ENCODE measurements at regions of chr14 and their contacts with region 1.

Region 1: DNA sequence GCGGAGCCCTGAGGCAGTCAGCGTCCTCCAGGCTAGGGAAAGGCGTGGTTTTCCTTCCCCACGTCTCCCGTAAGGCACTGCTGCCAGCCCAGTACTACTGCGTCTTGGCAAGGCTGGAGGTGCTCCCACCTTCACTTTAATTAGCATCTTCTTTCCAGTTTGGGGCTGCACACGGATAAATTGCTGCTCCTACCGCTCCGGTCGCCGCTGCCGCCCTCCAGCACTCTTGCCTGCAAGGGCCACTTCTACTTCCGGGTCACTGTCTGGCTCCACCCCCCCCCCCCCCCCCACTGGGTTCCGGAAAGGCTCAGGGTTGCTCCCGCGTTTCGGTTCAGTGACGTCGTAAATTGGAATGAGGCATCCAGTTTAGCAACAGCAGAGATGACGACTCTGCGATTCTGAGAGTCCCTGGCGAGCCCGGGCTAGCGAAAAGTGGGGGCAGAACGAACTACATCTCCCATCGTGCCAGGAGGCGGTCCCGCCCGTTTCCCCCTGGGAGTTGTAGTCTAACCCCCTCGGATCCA is at the start of gene NEDD8:
- DNase-seq: peak; percentile 97
- ATAC-seq: peak; percentile 91
- H3K4me3 ChIP-seq: peak within 1 kb of the TSS; percentile 56
- H3K27ac ChIP-seq: peak within 1 kb of the TSS; percentile 91
- H3K4me1 ChIP-seq: peaks cover 8% of the 10 kb centered on the region
- H3K27me3 ChIP-seq: no peaks in the 10 kb centered on the region
- CTCF ChIP-seq: no peak
- POLR2A ChIP-seq: peak; percentile 17; the same call in 1 of the 2 replicates
- RAD21 ChIP-seq: no peak
- total RNA-seq, gene NEDD8: 167 and 224 TPM in 2 replicates

Region 2: GRCh38 chr14:23469127-23469905 is 762.9 kb before region 1 on chr14 and contains the start of gene NGDN:
- CTCF ChIA-PET with region 1: no interaction called
- POLR2A ChIA-PET with region 1: no interaction called
- dilution Hi-C with region 1: no loop called
- in situ Hi-C with region 1: no loop called
- intact Hi-C with region 1: no loop called
- DNase-seq: peak; percentile 100
- ATAC-seq: peak; percentile 98
- H3K4me3 ChIP-seq: peak within 1 kb of the TSS; percentile 81
- H3K27ac ChIP-seq: peak within 1 kb of the TSS; percentile 69
- H3K4me1 ChIP-seq: no peaks in the 10 kb centered on the region
- H3K27me3 ChIP-seq: no peaks in the 10 kb centered on the region
- CTCF ChIP-seq: peak; percentile 83
- POLR2A ChIP-seq: peak; percentile 90
- RAD21 ChIP-seq: peak; percentile 51
- total RNA-seq, gene NGDN: 49.8 and 50.0 TPM in 2 replicates

Region 3: DNA sequence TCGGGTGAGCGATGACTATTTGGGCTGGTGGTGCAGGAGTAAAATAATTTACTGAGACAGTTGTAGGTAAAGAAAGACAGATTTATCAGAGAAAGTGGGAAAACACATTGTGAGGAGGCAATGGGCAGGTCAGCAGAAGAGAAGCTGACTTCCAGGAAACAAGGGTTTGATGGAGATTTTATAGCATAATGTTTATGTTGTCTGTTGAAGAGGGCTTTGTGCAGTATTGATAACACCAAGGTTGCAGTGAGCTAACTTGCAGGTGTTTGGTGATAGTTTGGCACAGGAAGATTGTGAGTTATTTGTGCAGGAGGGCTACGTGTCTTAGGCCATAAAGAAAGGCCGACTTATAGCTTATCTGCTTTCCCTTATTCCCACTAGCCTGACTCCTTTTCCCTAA is 523.8 kb before region 1 on chr14:
- CTCF ChIA-PET with region 1: no interaction called
- POLR2A ChIA-PET with region 1: no interaction called
- dilution Hi-C with region 1: no loop called
- in situ Hi-C with region 1: no loop called
- intact Hi-C with region 1: no loop called
- DNase-seq: no peak
- ATAC-seq: no peak
- H3K4me3 ChIP-seq: no peak overlapping the region
- H3K27ac ChIP-seq: no peak overlapping the region
- H3K4me1 ChIP-seq: no peaks in the 10 kb centered on the region
- H3K27me3 ChIP-seq: no peaks in the 10 kb centered on the region
- CTCF ChIP-seq: no peak
- POLR2A ChIP-seq: no peak
- RAD21 ChIP-seq: no peak

Region 4: GRCh38 chr14:24215495-24216344 is 16.5 kb before region 1 on chr14 and contains the start of gene MDP1:
- CTCF ChIA-PET with region 1: interaction called, 7 read pairs
- POLR2A ChIA-PET with region 1: interaction called, 4 read pairs
- dilution Hi-C with region 1: no loop called
- in situ Hi-C with region 1: no loop called
- intact Hi-C with region 1: loop called (anchors 1 kb)
- DNase-seq: peak; percentile 83
- ATAC-seq: peak; percentile 71
- H3K4me3 ChIP-seq: peak within 1 kb of the TSS; percentile 74
- H3K27ac ChIP-seq: peak within 1 kb of the TSS; percentile 88
- H3K4me1 ChIP-seq: peaks cover 2% of the 10 kb centered on the region
- H3K27me3 ChIP-seq: no peaks in the 10 kb centered on the region
- CTCF ChIP-seq: peak; percentile 75
- POLR2A ChIP-seq: peak; percentile 82
- RAD21 ChIP-seq: peak; percentile 77
- total RNA-seq, gene MDP1: 15.1 and 16.7 TPM in 2 replicates

Measured in IMR-90 (cell line).